Esophagus muscularis mucosa (tissue), 4 donors: ENCODE measurements at regions of chr2 and their contacts with region 1.

Region 1: DNA sequence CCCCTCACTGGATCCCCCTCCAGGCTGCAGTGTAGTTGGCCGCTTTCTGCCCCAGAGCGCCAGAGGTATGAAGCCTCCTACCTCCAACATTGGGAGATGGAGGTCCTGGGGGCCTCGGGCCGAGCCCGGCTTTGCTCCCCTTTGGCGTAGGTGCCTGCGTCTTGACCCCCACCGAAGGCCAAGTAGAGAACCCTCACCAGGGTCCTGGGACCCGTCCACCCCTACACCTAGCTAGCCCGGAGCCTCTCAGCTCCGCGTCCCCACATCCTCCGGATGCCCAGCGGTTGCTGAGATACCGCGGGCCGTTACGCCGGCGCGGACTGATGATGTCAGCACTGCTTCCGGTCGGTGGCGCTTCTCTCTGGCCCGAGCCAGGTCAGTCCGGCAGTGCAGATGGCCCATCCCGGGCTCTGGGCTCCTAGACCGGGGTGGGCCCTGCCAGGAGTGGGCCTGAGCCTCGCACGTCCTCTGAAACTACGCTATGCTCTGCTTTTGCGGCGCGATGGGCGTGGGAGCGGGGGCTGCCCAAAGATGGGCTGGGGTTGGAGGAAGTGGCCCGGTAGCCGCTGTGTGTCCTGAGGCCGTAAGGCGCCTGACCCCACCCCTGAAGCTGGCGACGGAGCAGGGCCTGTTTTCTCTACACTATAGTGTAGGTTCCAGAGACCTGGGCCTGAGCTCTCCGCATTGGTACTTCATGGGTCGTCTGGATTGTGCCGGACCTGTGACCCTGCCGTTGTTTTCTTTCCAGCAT is at the starts of genes GLB1L and STK16:
- DNase-seq: peak; percentile 99
- H3K4me3 ChIP-seq: peak within 1 kb of the TSS; percentile 64 to 97 (median 70)
- H3K27ac ChIP-seq: peak within 1 kb of the TSS; percentile 88 to 94 (median 90)
- H3K4me1 ChIP-seq: peaks cover 41 to 57% (median 50%) of the 10 kb centered on the region in 4 donors
- H3K27me3 ChIP-seq: no peaks in the 10 kb centered on the region
- CTCF ChIP-seq: no peak
- EP300 ChIP-seq: no peak
- POLR2A ChIP-seq: peak; percentile 79
- total RNA-seq, gene GLB1L: 3.3 to 6.4 (median 5.6) TPM
- total RNA-seq, gene STK16: 12.8 to 21.6 (median 16.7) TPM

Region 2: GRCh38 chr2:219229305-219230058 is 15.8 kb before region 1 on chr2 and contains the starts of genes ANKZF1 and ATG9A:
- intact Hi-C with region 1: loop called (anchors 2 kb)
- DNase-seq: peak; percentile 100
- H3K4me3 ChIP-seq: peak within 1 kb of the TSS; percentile 63 to 88 (median 80)
- H3K27ac ChIP-seq: peak within 1 kb of the TSS; percentile 90 to 98 (median 94)
- H3K4me1 ChIP-seq: peaks cover 27 to 52% (median 40%) of the 10 kb centered on the region in 4 donors
- H3K27me3 ChIP-seq: no peaks in the 10 kb centered on the region
- CTCF ChIP-seq: no peak
- EP300 ChIP-seq: peak; percentile 28
- POLR2A ChIP-seq: peak; percentile 51
- total RNA-seq, gene ANKZF1: 20.4 to 34.1 (median 27.6) TPM
- total RNA-seq, gene ATG9A: 41.5 to 75.3 (median 56.2) TPM